ENCODE measurements at regions of chr18 and their contacts with region 1.

Region 1: GRCh38 chr18:68648191-68648590 is 66.7 kb downstream of the TMX3 start:
- DNase-seq: no peak
- ATAC-seq: no peak
- H3K4me3 Mint-ChIP-seq: no peak overlapping the region
- H3K27ac Mint-ChIP-seq: no peak overlapping the region
- H3K4me1 Mint-ChIP-seq: peaks cover 7% of the 10 kb centered on the region
- H3K27me3 Mint-ChIP-seq: peaks cover 38% of the 10 kb centered on the region

Region 2: DNA sequence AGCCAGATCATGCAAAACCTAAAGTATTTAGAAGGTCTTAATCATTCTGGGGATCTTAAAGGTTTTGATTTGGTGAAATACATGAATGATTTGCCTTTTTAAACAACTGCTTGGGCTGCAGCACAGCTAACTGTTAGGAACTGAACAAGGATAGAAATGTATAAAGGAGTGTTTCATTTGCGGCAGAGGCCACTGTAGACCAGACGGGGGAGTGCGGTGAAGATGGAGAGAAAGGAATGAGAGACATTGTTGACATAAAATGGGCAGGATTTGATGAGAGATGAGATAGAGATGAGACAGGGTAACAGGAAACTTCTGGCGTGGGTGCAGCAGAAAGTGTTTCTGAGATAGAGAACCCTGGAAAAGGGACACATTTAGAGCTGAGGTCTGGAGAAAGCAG is 241.4 kb before region 1 on chr18:
- CTCF ChIA-PET with region 1: no interaction called
- DNase-seq: no peak
- ATAC-seq: no peak
- H3K4me3 Mint-ChIP-seq: no peak overlapping the region
- H3K27ac Mint-ChIP-seq: no peak overlapping the region
- H3K4me1 Mint-ChIP-seq: no peaks in the 10 kb centered on the region
- H3K27me3 Mint-ChIP-seq: no peaks in the 10 kb centered on the region

Region 3: GRCh38 chr18:68660354-68661183 is 12.4 kb after region 1 on chr18:
- CTCF ChIA-PET with region 1: interaction called, 10 read pairs
- DNase-seq: no peak
- ATAC-seq: no peak
- H3K4me3 Mint-ChIP-seq: no peak overlapping the region
- H3K27ac Mint-ChIP-seq: no peak overlapping the region
- H3K4me1 Mint-ChIP-seq: no peaks in the 10 kb centered on the region
- H3K27me3 Mint-ChIP-seq: peaks cover 3% of the 10 kb centered on the region